ENCODE measurements at regions of chr17 and their contacts with region 1.

Region 1: GRCh38 chr17:43576563-43577229 is 30.6 kb upstream of the ETV4 start:
- DNase-seq: no peak
- H3K4me3 ChIP-seq: no peak overlapping the region
- CTCF ChIP-seq: peak; percentile 80

Region 2: DNA sequence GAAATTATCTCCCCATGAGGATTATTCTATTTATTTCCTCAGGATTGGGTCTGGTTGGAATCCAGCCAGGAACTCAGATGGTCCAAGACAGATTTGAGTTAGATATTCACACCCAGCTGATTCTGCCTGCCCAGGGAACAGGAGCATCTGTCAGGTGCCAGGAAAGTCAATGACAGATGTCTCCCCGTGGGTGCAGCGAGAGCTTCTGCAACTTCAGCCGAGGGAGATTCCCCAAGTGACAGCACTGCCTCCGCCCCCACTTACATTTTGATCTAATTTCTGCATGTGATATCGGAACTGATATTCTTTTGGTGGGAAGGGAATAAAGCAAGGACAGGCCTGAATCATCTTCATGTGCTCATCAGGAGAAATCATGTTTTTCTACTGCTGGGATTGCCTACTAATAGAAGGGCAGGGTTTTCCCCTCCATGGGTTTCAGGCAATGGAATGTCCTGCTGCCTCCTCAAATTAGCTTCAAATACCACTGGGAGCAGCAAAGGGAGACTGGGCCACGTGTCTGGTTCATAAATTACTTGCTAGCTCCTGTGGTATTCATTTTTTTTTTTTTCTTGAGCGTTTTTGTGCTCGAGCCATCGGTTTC is 108.6 kb before region 1 on chr17:
- CTCF ChIA-PET with region 1: no interaction called
- POLR2A ChIA-PET with region 1: no interaction called
- DNase-seq: peak; percentile 92
- H3K4me3 ChIP-seq: no peak overlapping the region
- CTCF ChIP-seq: no peak

Region 3: GRCh38 chr17:43517615-43518386 is 58.9 kb before region 1 on chr17:
- CTCF ChIA-PET with region 1: interaction called, 112 read pairs
- POLR2A ChIA-PET with region 1: no interaction called
- DNase-seq: no peak
- H3K4me3 ChIP-seq: no peak overlapping the region
- CTCF ChIP-seq: no peak

Region 4: DNA sequence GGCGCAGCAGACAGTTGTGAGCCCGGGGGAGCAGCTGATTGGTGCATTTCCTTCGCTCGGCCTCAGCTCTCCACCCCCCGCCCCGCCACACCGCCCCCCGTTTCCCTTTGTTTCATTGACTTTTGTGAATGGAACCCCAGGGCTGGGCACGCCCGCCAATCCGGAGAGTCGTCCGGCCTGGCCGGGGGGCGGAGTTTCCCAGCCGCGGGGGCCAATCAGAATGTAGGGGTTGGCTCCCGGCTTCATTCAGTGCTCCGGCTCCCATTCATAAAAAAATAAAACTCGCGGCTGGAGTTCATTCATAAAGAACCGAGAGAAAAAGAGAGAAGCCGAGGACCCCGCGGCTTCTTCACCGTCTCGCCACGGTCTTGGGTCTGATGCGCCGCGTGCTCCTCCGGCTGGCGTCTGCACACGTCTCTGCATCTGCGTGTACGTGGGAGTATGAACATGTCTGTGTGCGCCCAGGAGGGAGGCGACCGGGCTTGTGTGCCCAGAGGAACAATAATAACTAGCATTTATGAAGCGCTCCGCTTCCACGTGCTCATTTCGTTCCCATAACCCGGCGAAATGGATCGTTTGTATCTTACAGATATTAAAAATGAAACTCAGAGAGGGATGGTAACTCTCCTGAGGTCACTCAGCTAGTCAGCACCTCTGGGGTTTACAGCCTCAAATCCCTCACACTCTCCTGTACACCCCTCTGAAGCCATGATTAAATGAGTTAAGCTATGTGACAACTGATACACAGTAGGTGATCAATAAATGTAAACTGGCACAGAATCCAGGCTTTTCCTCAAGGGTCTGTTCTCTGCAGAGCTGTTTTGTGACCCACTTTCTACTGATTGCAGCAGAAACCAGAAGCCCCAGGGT is 30.1 kb before region 1 on chr17 and contains the start of gene ETV4:
- CTCF ChIA-PET with region 1: interaction called, 27 read pairs
- POLR2A ChIA-PET with region 1: no interaction called
- DNase-seq: no peak
- H3K4me3 ChIP-seq: peak within 1 kb of the TSS; percentile 61
- CTCF ChIP-seq: no peak

Region 5: GRCh38 chr17:43591779-43592562 is 15.3 kb after region 1 on chr17:
- CTCF ChIA-PET with region 1: interaction called, 28 read pairs
- POLR2A ChIA-PET with region 1: interaction called, 17 read pairs
- DNase-seq: no peak
- H3K4me3 ChIP-seq: peak overlapping the region; percentile 10; the same call in 1 of the 2 replicates
- CTCF ChIP-seq: no peak

Region 6: GRCh38 chr17:43652124-43652480 is 75.4 kb after region 1 on chr17:
- CTCF ChIA-PET with region 1: interaction called, 11 read pairs
- POLR2A ChIA-PET with region 1: no interaction called
- DNase-seq: no peak
- H3K4me3 ChIP-seq: no peak overlapping the region
- CTCF ChIP-seq: no peak

Region 7: GRCh38 chr17:43701318-43701743 is 124.6 kb after region 1 on chr17:
- CTCF ChIA-PET with region 1: interaction called, 137 read pairs
- POLR2A ChIA-PET with region 1: no interaction called
- DNase-seq: no peak
- H3K4me3 ChIP-seq: no peak overlapping the region
- CTCF ChIP-seq: no peak

Region 8: DNA sequence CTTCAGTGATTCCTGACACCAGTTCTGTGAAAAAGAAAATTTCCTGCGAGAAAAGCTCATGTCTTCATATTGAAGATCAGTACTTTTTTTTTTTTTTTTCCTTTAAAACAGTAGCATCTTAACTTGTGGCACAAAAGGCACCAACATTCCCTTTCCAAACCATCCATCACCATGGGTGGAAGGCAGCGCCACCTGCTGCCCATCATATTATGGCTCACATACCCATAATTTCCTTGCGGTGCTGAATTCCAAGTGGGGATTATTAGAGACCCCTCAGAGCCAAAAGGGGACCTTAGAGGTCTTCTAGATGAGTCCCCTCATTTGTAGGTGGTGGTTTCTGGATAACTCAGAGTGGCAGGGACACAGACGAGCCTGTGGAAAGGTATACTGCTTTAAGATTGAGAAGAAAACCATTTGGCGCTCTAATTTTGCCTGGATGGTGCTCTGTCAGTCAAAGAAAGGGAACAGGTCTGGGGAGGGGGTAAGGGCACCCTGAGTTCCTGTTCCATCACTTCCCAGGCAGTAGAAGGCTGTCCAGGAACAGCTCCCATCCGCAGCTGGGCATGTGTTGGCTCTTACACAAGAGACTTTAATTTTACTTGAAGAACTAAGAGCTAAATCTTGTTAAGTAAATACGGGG is 189.8 kb after region 1 on chr17:
- CTCF ChIA-PET with region 1: interaction called, 122 read pairs
- POLR2A ChIA-PET with region 1: no interaction called
- DNase-seq: no peak
- H3K4me3 ChIP-seq: no peak overlapping the region
- CTCF ChIP-seq: peak; percentile 78

Measured in AG04449 (cell line).